HCT116 (cell line): ENCODE measurements at regions of chr18 and their contacts with region 1.

Region 1: DNA sequence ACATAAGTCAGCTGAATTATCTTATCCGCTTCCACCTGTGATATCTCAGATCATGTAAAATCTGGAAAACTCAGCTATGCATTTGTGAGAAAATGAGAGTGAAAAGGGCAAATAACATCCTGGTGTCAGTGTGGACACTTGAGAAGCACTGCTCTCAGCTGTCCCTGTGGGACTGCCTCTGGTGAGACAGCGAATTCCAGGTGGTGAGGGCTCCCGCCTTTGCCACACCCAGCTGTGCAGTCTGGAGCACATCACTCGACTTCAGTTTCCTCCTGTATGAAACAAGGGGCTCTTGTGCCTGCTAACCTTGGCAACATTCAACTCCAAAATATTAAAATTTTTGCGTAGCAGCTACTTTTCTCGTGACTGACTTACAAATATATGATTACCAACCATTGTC is 194.9 kb upstream of the BOD1L2 start:
- DNase-seq: no peak
- ATAC-seq: no peak
- H3K4me3 ChIP-seq: no peak overlapping the region
- H3K27ac ChIP-seq: no peak overlapping the region
- H3K4me1 ChIP-seq: no peaks in the 10 kb centered on the region
- H3K27me3 ChIP-seq: no peaks in the 10 kb centered on the region
- CTCF ChIP-seq: no peak
- POLR2A ChIP-seq: no peak
- RAD21 ChIP-seq: no peak

Region 2: DNA sequence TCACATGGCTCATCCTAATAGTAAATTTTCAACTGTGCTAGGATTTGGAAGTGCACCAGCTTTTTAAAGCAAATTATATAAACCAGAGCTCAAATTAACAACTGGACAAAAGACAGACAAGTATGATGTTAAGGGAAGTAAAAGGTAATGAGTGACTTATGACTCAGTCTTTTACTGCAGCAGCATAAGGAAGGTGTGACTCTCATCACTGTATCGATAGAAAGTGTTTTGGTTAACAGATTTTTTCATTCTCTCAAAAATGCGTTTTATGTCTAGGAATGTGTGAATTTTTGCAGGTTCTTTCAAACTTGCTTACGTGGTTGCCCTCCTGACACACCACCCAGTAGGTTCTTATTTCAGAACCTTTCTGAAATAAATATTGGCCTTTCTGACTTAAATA is 49.4 kb before region 1 on chr18:
- CTCF ChIA-PET with region 1: no interaction called
- POLR2A ChIA-PET with region 1: no interaction called
- RAD21 ChIA-PET with region 1: no interaction called
- intact Hi-C with region 1: loop called (anchors 5 kb)
- DNase-seq: no peak
- ATAC-seq: no peak
- H3K4me3 ChIP-seq: no peak overlapping the region
- H3K27ac ChIP-seq: no peak overlapping the region
- H3K4me1 ChIP-seq: peaks cover 0 to 3% of the 10 kb centered on the region in 2 experiments; a peak in 1 of 4 replicates
- H3K27me3 ChIP-seq: no peaks in the 10 kb centered on the region
- CTCF ChIP-seq: no peak
- POLR2A ChIP-seq: no peak
- RAD21 ChIP-seq: no peak

Region 3: GRCh38 chr18:57362714-57363113 is 410.7 kb after region 1 on chr18:
- CTCF ChIA-PET with region 1: no interaction called
- POLR2A ChIA-PET with region 1: no interaction called
- RAD21 ChIA-PET with region 1: no interaction called
- intact Hi-C with region 1: no loop called
- DNase-seq: no peak
- ATAC-seq: no peak
- H3K4me3 ChIP-seq: no peak overlapping the region
- H3K27ac ChIP-seq: no peak overlapping the region
- H3K4me1 ChIP-seq: no peaks in the 10 kb centered on the region
- H3K27me3 ChIP-seq: peaks cover 74% of the 10 kb centered on the region
- CTCF ChIP-seq: no peak
- POLR2A ChIP-seq: no peak
- RAD21 ChIP-seq: no peak